Natural killer cell (primary cell): ENCODE measurements at regions of chr17 and their contacts with region 1.

Region 1: DNA sequence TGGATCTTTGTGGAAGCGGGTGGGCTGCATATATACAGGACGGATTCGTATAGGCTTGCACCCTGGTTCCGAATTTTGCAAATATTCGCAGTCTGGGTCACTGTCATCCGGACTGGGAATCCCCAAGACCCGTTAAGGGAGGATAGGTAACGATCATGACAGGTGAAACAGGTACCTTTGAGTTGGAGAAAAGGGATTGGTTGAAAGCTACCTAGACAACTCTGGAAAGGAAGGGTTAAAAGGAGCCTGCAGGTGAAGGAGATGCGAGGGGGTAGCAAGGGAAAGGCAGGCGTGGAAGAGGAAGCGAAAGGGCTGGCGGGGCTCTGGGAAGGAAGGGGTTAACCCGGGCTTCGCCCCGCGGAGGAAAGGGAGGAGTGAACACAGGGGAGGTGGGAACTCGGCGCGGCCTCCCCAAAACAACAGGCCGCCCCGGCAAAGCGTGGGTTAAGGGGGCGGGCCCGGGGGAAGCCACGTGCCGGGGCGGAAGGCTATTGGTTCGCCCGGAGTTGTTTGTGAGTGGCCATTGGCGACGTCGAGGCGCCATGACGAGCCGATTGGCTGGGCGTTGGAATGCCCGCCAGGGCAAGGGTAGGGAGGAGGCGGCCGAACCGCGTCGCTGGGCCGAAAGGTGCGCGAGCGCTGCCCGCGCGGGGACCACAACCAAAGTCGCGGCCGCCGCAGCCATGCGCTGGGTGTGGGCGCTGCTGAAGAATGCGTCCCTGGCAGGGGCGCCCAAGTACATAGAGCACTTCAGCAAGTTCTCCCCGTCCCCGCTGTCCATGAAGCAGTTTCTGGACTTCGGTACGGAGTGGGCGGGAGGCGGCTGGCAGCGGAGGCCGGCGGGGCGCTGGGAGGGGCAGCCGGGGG is at the start of gene PDK2:
- DNase-seq: peak; percentile 96 to 97
- ATAC-seq: peak; percentile 90 to 99 (median 91)
- H3K4me3 ChIP-seq: peak within 1 kb of the TSS; percentile 61
- H3K4me3 Mint-ChIP-seq: peak within 1 kb of the TSS; percentile 95
- H3K27ac ChIP-seq: peak within 1 kb of the TSS; percentile 53
- H3K27ac Mint-ChIP-seq: peak within 1 kb of the TSS; percentile 96 to 98
- H3K4me1 ChIP-seq: peaks cover 35% of the 10 kb centered on the region
- H3K4me1 Mint-ChIP-seq: peaks cover 41 to 47% of the 10 kb centered on the region in 2 donors
- H3K27me3 ChIP-seq: no peaks in the 10 kb centered on the region
- H3K27me3 Mint-ChIP-seq: peaks cover 0 to 4% of the 10 kb centered on the region in 2 donors
- CTCF ChIP-seq: no peak
- total RNA-seq, gene PDK2: 23.2 to 32.9 (median 23.6) TPM

Region 2: DNA sequence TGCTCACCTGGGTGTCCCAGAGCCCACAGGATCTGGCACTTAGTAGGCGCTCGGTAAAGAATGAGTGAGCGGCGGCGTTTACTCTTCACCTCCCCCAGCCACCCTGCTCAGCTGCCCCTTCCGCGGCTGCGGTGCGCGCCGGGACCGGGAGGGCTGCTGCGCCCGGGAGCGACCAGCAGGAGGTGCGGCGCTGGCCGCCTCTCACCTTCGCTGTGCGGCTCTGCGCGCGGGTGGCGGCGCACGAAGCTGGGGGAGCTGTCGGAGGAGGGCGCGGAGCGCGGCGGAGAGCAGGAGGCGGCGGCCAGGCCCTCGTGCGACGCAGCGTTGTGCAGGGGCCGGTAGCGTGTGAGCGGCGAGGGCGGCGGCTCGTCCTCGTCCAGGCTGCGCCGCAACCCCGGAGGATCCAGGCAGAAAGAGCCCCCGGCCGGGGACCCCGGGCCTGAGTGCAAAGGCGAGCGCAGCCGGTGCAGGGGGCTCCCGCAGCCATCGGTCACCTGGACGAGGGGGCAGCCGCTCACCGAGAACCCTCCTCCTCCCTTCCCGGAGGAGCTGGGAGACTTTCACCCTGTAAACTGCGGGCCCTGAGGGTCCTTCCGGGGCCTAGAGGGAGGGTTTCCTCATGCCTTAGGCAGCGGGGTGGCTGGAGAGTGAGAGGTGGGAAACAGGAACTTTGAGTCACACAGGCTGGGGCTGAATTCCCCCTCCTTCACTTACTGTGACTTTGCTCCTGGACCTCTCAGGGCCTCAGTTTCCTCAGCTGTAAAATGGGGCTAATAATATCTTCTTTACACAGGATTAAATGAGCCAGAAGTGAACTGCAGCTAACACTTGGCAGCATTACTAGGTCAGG is 22.4 kb after region 1 on chr17:
- intact Hi-C with region 1: no loop called
- DNase-seq: peak; percentile 45 to 82
- ATAC-seq: peak; percentile 72 to 94 (median 91)
- H3K4me3 ChIP-seq: no peak overlapping the region
- H3K4me3 Mint-ChIP-seq: peak overlapping the region; percentile 53
- H3K27ac ChIP-seq: no peak overlapping the region
- H3K27ac Mint-ChIP-seq: peak overlapping the region in 1 of 2 donors; percentile 51
- H3K4me1 ChIP-seq: peaks cover 11% of the 10 kb centered on the region
- H3K4me1 Mint-ChIP-seq: peaks cover 12 to 14% of the 10 kb centered on the region in 2 donors
- H3K27me3 ChIP-seq: peaks cover 11% of the 10 kb centered on the region
- H3K27me3 Mint-ChIP-seq: peaks cover 41 to 50% of the 10 kb centered on the region in 2 donors
- CTCF ChIP-seq: peak; percentile 27

Region 3: GRCh38 chr17:50139950-50140871 is 45.2 kb after region 1 on chr17:
- intact Hi-C with region 1: no loop called
- DNase-seq: peak; percentile 81 to 88
- ATAC-seq: peak; percentile 88 to 90 (median 89)
- H3K4me3 ChIP-seq: no peak overlapping the region
- H3K4me3 Mint-ChIP-seq: peak overlapping the region; percentile 14
- H3K27ac ChIP-seq: peak overlapping the region; percentile 37
- H3K27ac Mint-ChIP-seq: peak overlapping the region; percentile 81 to 84
- H3K4me1 ChIP-seq: peaks cover 60% of the 10 kb centered on the region
- H3K4me1 Mint-ChIP-seq: peaks cover 58 to 82% of the 10 kb centered on the region in 2 donors
- H3K27me3 ChIP-seq: no peaks in the 10 kb centered on the region
- H3K27me3 Mint-ChIP-seq: no peaks in the 10 kb centered on the region
- CTCF ChIP-seq: peak; percentile 91

Region 4: GRCh38 chr17:50151041-50151936 is 56.3 kb after region 1 on chr17:
- intact Hi-C with region 1: loop called (anchors 5 kb)
- DNase-seq: peak; percentile 79 to 91
- ATAC-seq: peak; percentile 73 to 90 (median 83)
- H3K4me3 ChIP-seq: peak overlapping the region; percentile 73
- H3K4me3 Mint-ChIP-seq: peak overlapping the region; percentile 85
- H3K27ac ChIP-seq: peak overlapping the region; percentile 70
- H3K27ac Mint-ChIP-seq: peak overlapping the region; percentile 70 to 86
- H3K4me1 ChIP-seq: peaks cover 54% of the 10 kb centered on the region
- H3K4me1 Mint-ChIP-seq: peaks cover 28 to 40% of the 10 kb centered on the region in 2 donors
- H3K27me3 ChIP-seq: no peaks in the 10 kb centered on the region
- H3K27me3 Mint-ChIP-seq: no peaks in the 10 kb centered on the region
- CTCF ChIP-seq: peak; percentile 40

Region 5: GRCh38 chr17:50161023-50161910 is 66.3 kb after region 1 on chr17:
- intact Hi-C with region 1: loop called (anchors 2 kb)
- DNase-seq: peak; percentile 91 to 98
- ATAC-seq: peak; percentile 99
- H3K4me3 ChIP-seq: peak overlapping the region; percentile 30
- H3K4me3 Mint-ChIP-seq: peak overlapping the region; percentile 42
- H3K27ac ChIP-seq: no peak overlapping the region
- H3K27ac Mint-ChIP-seq: peak overlapping the region; percentile 19 to 73
- H3K4me1 ChIP-seq: peaks cover 22% of the 10 kb centered on the region
- H3K4me1 Mint-ChIP-seq: peaks cover 23 to 27% of the 10 kb centered on the region in 2 donors
- H3K27me3 ChIP-seq: no peaks in the 10 kb centered on the region
- H3K27me3 Mint-ChIP-seq: peaks cover 0 to 9% of the 10 kb centered on the region in 2 donors
- CTCF ChIP-seq: peak; percentile 94

Region 6: GRCh38 chr17:50297407-50297865 is 202.4 kb after region 1 on chr17:
- intact Hi-C with region 1: loop called (anchors 10 kb)
- DNase-seq: peak; percentile 66 to 86
- ATAC-seq: peak; percentile 89 to 98 (median 97)
- H3K4me3 ChIP-seq: no peak overlapping the region
- H3K4me3 Mint-ChIP-seq: no peak overlapping the region
- H3K27ac ChIP-seq: no peak overlapping the region
- H3K27ac Mint-ChIP-seq: no peak overlapping the region
- H3K4me1 ChIP-seq: no peaks in the 10 kb centered on the region
- H3K4me1 Mint-ChIP-seq: peaks cover 2% of the 10 kb centered on the region in 2 donors
- H3K27me3 ChIP-seq: peaks cover 2% of the 10 kb centered on the region
- H3K27me3 Mint-ChIP-seq: peaks cover 2 to 16% of the 10 kb centered on the region in 2 donors
- CTCF ChIP-seq: peak; percentile 78